PC-3 (cell line): ENCODE measurements at regions of chr22 and their contacts with region 1.

Region 1: GRCh38 chr22:24576778-24577177 is 16.1 kb downstream of the LRRC75B start:
- DNase-seq: no peak
- ATAC-seq: no peak
- H3K4me3 ChIP-seq: no peak overlapping the region
- H3K27ac ChIP-seq: no peak overlapping the region
- H3K4me1 ChIP-seq: peaks cover 11% of the 10 kb centered on the region
- H3K27me3 ChIP-seq: no peaks in the 10 kb centered on the region
- CTCF ChIP-seq: no peak

Region 2: GRCh38 chr22:24543679-24544243 is 33.0 kb before region 1 on chr22:
- CTCF ChIA-PET with region 1: no interaction called
- POLR2A ChIA-PET with region 1: no interaction called
- intact Hi-C with region 1: no loop called
- DNase-seq: no peak
- ATAC-seq: no peak
- H3K4me3 ChIP-seq: no peak overlapping the region
- H3K27ac ChIP-seq: no peak overlapping the region
- H3K4me1 ChIP-seq: no peaks in the 10 kb centered on the region
- H3K27me3 ChIP-seq: no peaks in the 10 kb centered on the region
- CTCF ChIP-seq: no peak

Region 3: DNA sequence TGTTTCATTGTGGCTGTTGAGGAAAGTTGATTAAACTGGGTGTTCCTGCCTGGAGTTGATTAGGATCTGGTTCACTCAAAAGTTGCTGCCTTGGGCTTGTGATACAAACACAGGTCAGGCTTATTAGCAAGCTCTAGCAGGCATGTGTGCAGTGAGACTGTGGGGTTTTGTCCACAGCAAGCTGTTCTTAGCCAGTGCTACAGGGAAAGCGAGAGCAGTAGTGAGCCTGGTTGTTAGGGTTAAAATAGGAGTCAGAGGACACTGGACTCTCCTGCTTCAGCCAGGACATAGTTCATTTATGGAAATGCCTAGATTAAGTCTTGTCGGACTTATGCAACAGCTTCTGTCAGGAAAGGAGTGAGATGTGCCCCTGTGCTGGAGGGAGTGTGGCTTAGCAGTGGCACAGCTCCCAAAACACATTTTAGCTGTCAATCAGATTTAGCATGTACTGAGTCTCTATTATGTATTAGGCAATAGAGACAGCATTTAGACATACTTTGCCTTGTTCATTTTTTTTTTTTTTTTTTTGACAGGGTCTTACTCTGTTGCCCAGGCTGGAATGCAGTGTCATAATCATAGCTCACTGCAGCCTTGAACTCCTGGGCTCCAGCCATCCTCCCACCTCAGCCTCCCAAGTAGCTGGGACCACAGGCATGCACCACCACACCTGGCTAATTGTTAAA is 12.3 kb before region 1 on chr22:
- CTCF ChIA-PET with region 1: no interaction called
- POLR2A ChIA-PET with region 1: no interaction called
- intact Hi-C with region 1: loop called (anchors 1 kb)
- DNase-seq: no peak
- ATAC-seq: no peak
- H3K4me3 ChIP-seq: no peak overlapping the region
- H3K27ac ChIP-seq: no peak overlapping the region
- H3K4me1 ChIP-seq: no peaks in the 10 kb centered on the region
- H3K27me3 ChIP-seq: no peaks in the 10 kb centered on the region
- CTCF ChIP-seq: no peak

Region 4: GRCh38 chr22:24834845-24835570 is 258.2 kb after region 1 on chr22:
- CTCF ChIA-PET with region 1: no interaction called
- POLR2A ChIA-PET with region 1: no interaction called
- intact Hi-C with region 1: no loop called
- DNase-seq: peak; percentile 12
- ATAC-seq: no peak
- H3K4me3 ChIP-seq: no peak overlapping the region
- H3K27ac ChIP-seq: no peak overlapping the region
- H3K4me1 ChIP-seq: no peaks in the 10 kb centered on the region
- H3K27me3 ChIP-seq: no peaks in the 10 kb centered on the region
- CTCF ChIP-seq: peak; percentile 39; the same call in 1 of the 2 replicates